ENCODE measurements at regions of chr19 and their contacts with region 1.

Region 1: DNA sequence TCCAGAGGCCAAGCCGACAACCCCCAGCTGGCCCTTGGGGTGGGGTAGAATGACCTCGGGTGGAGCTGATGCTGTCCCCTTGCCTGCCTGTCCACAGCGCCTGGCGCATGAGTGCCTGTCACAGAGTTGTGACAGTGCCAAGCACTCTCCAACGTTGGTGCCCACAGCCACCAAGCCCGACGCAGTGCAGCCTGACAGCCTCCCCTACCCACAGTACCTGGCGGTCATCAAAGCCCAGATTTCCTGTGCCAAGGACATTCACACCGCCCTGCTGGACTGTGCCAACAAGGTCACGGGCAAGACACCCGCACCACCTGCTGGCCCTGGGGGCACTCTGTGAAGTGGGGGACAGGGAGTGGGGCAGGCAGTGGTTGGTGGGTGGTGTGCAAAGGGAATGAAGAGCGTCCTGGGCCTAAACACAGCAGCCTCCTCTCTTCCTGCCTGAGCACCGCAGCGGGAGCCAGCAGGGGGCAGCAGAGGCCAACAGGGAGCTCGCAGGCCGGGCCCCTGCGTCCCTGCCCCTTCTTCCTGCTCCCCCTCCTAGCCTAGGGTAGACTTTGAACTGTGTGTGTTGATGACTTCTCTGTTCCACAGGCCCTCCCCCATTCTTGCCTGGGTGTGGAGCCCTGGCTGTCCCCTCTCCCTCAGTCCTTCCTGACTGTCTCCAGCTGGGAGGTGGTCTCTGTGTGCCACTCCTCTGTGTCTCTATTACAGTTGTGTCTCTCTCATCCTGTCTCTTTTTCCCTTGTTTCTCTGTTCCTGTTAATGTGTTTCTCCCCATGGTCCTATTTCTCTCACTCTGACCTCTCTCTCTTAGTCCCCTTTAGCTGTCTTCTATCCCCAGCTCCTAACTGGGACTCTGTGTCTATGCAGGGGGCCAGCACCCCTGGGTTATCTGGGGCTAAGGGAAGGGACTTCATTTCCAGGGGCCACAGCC is 6.5 kb downstream of the MED29 start:
- DNase-seq: peak; percentile 95 to 96
- ATAC-seq: peak; percentile 41 to 66 (median 42)
- H3K4me3 ChIP-seq: no peak overlapping the region
- H3K4me3 Mint-ChIP-seq: peak overlapping the region; percentile 61
- H3K27ac ChIP-seq: peak overlapping the region; percentile 91
- H3K27ac Mint-ChIP-seq: peak overlapping the region; percentile 96 to 97
- H3K4me1 ChIP-seq: peaks cover 57% of the 10 kb centered on the region
- H3K4me1 Mint-ChIP-seq: peaks cover 44 to 50% of the 10 kb centered on the region in 2 donors
- H3K27me3 ChIP-seq: no peaks in the 10 kb centered on the region
- H3K27me3 Mint-ChIP-seq: no peaks in the 10 kb centered on the region
- CTCF ChIP-seq: peak; percentile 96

Region 2: DNA sequence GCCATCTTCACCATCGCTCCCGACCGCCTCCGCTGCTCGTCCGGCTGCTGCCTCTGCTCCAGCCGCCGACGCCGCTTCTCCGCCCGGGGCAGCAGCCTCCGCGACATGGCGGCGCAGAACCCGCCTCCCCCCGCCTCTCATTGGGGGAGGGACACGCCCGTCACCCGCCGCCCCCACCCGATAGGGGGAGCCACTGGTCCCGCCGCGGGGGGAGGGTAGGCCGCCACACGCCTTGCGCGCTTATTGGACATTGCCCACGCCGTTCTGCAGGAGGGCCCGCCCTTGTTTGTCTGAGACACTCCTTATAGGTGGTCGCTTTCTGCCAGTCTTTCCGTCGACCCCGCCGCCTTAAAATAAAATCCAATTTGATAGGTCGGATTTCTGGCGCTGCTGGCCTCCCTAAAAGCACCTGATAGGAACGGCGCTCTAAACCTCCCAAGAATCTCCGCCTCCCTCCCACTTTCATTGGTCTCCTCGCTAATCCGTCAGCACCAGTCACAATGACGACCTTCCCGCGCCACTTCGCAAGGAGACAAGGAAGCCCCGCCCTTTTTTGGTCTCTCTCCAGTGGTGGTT is 547.7 kb before region 1 on chr19 and contains the start of gene HNRNPL:
- intact Hi-C with region 1: loop called (anchors 2 kb)
- DNase-seq: peak in 1 of 2 donors; percentile 98
- ATAC-seq: peak; percentile 58 to 85 (median 69)
- H3K4me3 ChIP-seq: peak within 1 kb of the TSS; percentile 84
- H3K4me3 Mint-ChIP-seq: peak within 1 kb of the TSS; percentile 96
- H3K27ac ChIP-seq: peak within 1 kb of the TSS; percentile 97
- H3K27ac Mint-ChIP-seq: peak within 1 kb of the TSS; percentile 99 to 100
- H3K4me1 ChIP-seq: peaks cover 61% of the 10 kb centered on the region
- H3K4me1 Mint-ChIP-seq: peaks cover 59 to 69% of the 10 kb centered on the region in 2 donors
- H3K27me3 ChIP-seq: no peaks in the 10 kb centered on the region
- H3K27me3 Mint-ChIP-seq: no peaks in the 10 kb centered on the region
- CTCF ChIP-seq: peak; percentile 26
- total RNA-seq, gene HNRNPL: 636 to 800 (median 702) TPM

Region 3: GRCh38 chr19:39223681-39224279 is 173.8 kb before region 1 on chr19:
- intact Hi-C with region 1: no loop called
- DNase-seq: peak in 1 of 2 donors; percentile 32
- ATAC-seq: peak in 2 of 3 donors; percentile 50 to 52
- H3K4me3 ChIP-seq: no peak overlapping the region
- H3K4me3 Mint-ChIP-seq: no peak overlapping the region
- H3K27ac ChIP-seq: no peak overlapping the region
- H3K27ac Mint-ChIP-seq: no peak overlapping the region
- H3K4me1 ChIP-seq: no peaks in the 10 kb centered on the region
- H3K4me1 Mint-ChIP-seq: peaks cover 0 to 11% of the 10 kb centered on the region in 2 donors
- H3K27me3 ChIP-seq: peaks cover 6% of the 10 kb centered on the region
- H3K27me3 Mint-ChIP-seq: peaks cover 0 to 26% of the 10 kb centered on the region in 2 donors
- CTCF ChIP-seq: no peak

Region 4: DNA sequence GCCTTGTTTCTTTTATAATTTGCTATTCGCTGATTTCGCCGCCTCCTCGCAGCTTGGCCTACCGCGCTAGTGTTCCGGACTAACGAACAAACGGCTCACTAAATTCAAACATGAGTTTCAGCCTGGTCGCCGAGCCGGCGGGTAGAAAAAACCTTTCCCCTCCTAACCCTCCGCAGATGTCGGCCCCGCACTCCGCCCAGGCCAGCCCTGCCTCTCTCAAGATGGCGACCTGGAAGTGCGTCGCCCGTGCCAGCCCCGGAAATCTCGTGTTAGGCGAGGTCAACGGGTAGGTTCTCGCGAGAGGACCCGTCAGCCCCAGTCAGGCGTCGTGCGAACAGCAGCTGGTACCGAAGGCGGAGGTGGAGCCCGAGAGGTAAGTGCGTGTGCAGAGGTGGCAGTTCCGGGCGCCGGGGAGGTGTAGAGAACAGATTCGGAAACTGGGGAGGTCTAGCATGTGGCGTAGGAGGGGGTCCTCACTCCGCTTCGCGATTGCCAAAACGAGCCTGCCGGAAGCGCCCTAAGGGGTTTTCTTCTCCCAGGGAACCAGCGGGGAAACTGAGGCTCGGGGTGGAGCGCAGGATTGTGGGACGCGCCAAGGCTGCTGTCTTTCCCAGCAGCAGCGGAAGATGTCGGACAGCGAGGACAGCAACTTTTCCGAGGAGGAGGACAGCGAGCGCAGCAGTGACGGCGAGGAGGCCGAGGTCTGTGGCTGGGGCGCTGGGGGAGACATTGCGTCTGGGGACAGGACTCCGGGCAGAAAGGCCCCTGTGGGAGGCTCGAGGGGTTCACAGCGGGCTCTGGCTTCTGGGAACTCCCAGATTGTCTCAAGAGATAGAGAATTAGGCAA is 47.9 kb after region 1 on chr19 and contains the start of gene SUPT5H:
- intact Hi-C with region 1: loop called (anchors 1 kb)
- DNase-seq: peak; percentile 96 to 100
- ATAC-seq: peak; percentile 93 to 98 (median 95)
- H3K4me3 ChIP-seq: peak within 1 kb of the TSS; percentile 99
- H3K4me3 Mint-ChIP-seq: peak within 1 kb of the TSS; percentile 98
- H3K27ac ChIP-seq: peak within 1 kb of the TSS; percentile 99
- H3K27ac Mint-ChIP-seq: peak within 1 kb of the TSS; percentile 97 to 100
- H3K4me1 ChIP-seq: peaks cover 56% of the 10 kb centered on the region
- H3K4me1 Mint-ChIP-seq: peaks cover 41 to 54% of the 10 kb centered on the region in 2 donors
- H3K27me3 ChIP-seq: no peaks in the 10 kb centered on the region
- H3K27me3 Mint-ChIP-seq: no peaks in the 10 kb centered on the region
- CTCF ChIP-seq: no peak
- total RNA-seq, gene SUPT5H: 228 to 256 (median 230) TPM

Region 5: DNA sequence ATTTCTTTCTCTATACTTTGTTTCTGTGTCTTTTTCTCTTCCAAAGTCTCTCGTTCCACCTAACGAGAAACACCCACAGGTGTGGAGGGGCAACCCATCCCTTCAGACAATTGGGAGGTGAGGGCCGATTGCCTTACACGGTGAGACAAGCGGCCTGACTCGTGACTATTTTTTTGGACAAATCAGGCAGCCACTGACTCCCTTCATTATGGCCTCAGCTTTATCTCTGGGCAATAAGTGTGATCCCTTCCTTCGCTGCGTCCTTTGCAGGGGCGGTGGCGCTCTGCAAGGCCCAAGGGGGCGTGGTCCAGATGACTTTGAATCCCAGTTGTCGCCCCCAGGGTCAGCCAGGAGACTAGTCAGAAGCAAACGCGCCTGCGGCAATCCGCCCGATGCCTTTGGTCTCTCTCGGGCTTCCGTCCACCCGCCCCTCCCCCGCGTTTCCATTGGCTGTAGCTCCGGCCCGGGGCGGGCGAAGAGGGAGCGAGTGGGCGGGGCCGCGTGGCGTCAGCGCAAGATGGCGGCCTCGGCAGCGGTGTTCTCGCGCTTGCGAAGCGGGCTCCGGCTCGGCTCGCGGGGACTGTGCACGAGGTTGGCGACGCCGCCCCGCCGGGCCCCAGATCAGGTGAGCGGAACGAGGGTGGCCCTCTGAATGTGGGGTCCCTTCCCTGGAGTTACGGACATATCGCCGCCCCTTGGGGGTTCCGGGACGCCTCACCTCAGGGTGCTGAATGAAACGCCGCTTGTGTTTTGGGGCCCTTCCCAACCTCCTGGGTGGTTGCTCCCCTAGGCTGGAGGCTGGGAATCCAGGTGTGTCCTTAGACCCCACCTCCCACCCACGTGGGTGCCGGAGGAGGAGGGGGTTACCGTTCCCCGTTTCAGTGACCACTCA is 83.0 kb after region 1 on chr19 and contains the start of gene TIMM50:
- intact Hi-C with region 1: loop called (anchors 5 kb)
- DNase-seq: peak; percentile 96 to 97
- ATAC-seq: peak; percentile 98 to 99 (median 99)
- H3K4me3 ChIP-seq: peak within 1 kb of the TSS; percentile 99
- H3K4me3 Mint-ChIP-seq: peak within 1 kb of the TSS; percentile 93
- H3K27ac ChIP-seq: peak within 1 kb of the TSS; percentile 77
- H3K27ac Mint-ChIP-seq: peak within 1 kb of the TSS; percentile 92 to 94
- H3K4me1 ChIP-seq: peaks cover 19% of the 10 kb centered on the region
- H3K4me1 Mint-ChIP-seq: peaks cover 20 to 22% of the 10 kb centered on the region in 2 donors
- H3K27me3 ChIP-seq: no peaks in the 10 kb centered on the region
- H3K27me3 Mint-ChIP-seq: no peaks in the 10 kb centered on the region
- CTCF ChIP-seq: no peak
- total RNA-seq, gene TIMM50: 50.1 to 67.2 (median 60.8) TPM

Region 6: DNA sequence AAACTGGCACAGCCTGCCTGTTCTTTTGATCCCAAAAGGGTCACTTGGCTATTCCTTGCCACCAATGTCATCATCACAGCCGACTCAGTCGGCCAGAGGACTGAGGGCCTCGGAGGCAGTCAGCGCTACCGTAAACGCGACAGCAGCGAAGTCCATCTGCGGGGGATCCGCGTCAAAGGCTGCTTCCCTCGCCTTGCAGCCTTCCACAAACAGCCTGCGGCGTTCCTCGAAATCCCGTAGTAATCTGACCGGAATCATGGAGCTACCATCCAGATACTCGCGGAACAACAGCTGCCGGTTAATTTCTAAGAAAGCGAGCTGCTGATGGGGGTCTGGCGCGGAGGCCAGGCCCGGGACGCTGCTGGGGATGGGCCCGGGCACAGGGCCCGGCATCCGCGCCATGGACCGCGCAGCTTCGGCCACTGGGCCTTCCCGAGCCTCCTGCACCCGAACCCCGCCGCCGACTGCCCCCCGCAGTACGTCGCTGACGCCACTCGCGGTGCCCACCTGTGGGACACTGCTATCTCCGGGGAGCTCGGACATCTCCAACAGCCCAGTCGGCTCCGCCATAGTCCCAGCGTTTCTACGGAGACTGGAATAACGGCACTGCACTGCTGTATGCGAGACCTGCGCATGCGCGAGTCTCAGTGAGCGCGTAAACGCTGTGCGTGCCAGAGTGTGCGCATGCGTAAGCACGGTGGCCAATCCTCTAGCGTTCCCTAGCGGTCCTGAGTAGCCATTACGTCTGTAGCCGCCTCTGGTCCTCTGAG is 134.8 kb after region 1 on chr19 and contains the start of gene EID2B:
- intact Hi-C with region 1: loop called (anchors 2 kb)
- DNase-seq: peak; percentile 92 to 100
- ATAC-seq: peak; percentile 96 to 99 (median 97)
- H3K4me3 ChIP-seq: peak within 1 kb of the TSS; percentile 70
- H3K4me3 Mint-ChIP-seq: peak within 1 kb of the TSS; percentile 93
- H3K27ac ChIP-seq: peak within 1 kb of the TSS; percentile 73
- H3K27ac Mint-ChIP-seq: peak within 1 kb of the TSS; percentile 79 to 86
- H3K4me1 ChIP-seq: peaks cover 14% of the 10 kb centered on the region
- H3K4me1 Mint-ChIP-seq: peaks cover 8 to 13% of the 10 kb centered on the region in 2 donors
- H3K27me3 ChIP-seq: no peaks in the 10 kb centered on the region
- H3K27me3 Mint-ChIP-seq: no peaks in the 10 kb centered on the region
- CTCF ChIP-seq: peak; percentile 90
- total RNA-seq, gene EID2B: 4.6 to 6.7 (median 5.8) TPM